PC-9 (cell line): ENCODE measurements at regions of chr19 and their contacts with region 1.

Region 1: DNA sequence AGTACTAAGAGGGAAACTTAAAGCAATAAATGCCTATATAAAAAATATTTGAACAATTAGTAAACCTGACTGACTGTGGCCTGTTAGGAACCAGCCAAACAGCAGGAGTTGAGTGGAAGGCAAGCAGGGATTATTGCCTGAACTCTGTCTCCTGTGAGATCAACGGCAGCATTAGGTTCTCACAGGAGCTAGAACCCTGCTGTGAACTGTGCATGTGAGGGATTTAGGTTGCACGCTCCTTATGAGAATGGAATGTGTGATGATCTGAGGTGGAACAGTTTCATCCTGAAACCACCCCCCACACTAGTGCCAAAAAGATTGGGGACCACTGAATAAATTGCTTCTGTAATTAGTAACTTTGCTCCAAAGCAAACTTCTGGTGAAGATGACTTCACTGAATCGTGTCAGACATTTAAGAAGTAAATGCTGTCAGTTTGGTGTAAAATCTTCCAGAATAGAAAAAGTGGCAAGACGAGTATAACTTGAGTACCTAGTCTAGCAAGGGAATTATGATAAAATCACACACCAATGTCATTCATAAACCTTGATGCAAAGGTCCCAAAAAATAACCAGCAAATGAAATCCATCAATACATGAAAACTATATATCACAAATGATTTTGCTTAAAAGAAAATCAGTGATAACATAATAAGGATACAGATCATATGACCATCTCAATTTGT is 53.8 kb downstream of the SLC6A16 start:
- DNase-seq: peak in 1 of 2 experiments; percentile 44
- H3K4me3 ChIP-seq: no peak overlapping the region
- H3K27ac ChIP-seq: no peak overlapping the region
- H3K4me1 ChIP-seq: no peaks in the 10 kb centered on the region
- H3K27me3 ChIP-seq: no peaks in the 10 kb centered on the region
- CTCF ChIP-seq: no peak

Region 2: DNA sequence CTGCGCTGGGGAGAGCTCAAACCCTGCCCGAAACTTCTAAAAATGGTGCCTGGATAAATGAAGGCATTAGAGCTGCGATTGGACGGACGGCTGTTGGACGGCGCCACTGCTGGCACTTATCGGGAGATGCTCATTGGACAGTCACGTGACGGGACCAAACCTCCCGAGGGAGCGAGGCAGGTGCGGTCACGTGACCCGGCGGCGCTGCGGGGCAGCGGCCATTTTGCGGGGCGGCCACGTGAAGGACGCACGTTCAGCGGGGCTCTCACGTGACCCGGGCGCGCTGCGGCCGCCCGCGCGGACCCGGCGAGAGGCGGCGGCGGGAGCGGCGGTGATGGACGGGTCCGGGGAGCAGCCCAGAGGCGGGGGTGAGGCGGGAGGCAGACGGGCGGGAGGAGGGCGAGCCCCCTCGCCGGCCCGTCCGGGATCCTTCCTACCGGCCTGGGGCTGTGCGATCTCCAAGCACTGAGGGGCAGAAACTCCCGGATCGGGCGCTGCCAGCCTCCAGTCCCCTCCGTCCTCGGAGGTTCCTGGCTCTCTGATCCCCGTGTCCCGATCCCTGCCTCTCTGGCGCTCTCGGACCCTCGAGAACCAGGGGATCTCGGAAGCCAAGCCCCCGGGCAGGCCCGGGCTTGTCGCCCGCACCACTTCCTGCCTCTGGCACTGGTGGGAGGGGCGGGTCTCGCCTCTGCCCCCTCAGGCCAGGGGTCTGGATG is 316.5 kb before region 1 on chr19 and contains the start of gene BAX:
- CTCF ChIA-PET with region 1: no interaction called
- POLR2A ChIA-PET with region 1: no interaction called
- intact Hi-C with region 1: no loop called
- DNase-seq: peak; percentile 88 to 97
- H3K4me3 ChIP-seq: peak within 1 kb of the TSS; percentile 92
- H3K27ac ChIP-seq: peak within 1 kb of the TSS; percentile 40
- H3K4me1 ChIP-seq: peaks cover 10% of the 10 kb centered on the region; the same call in 1 of the 2 replicates
- H3K27me3 ChIP-seq: no peaks in the 10 kb centered on the region
- CTCF ChIP-seq: no peak; the same call in 1 of the 2 replicates
- total RNA-seq, gene BAX: 140 and 198 TPM in 2 replicates

Region 3: GRCh38 chr19:49713236-49713853 is 442.1 kb after region 1 on chr19:
- CTCF ChIA-PET with region 1: no interaction called
- POLR2A ChIA-PET with region 1: interaction called, 15 read pairs
- intact Hi-C with region 1: no loop called
- DNase-seq: peak; percentile 65 to 82
- H3K4me3 ChIP-seq: no peak overlapping the region
- H3K27ac ChIP-seq: no peak overlapping the region
- H3K4me1 ChIP-seq: peaks cover 24% of the 10 kb centered on the region
- H3K27me3 ChIP-seq: no peaks in the 10 kb centered on the region
- CTCF ChIP-seq: no peak